Posterior cingulate gyrus (tissue), 11 donors: ENCODE measurements at regions of chr11 and their contacts with region 1.

Region 1: DNA sequence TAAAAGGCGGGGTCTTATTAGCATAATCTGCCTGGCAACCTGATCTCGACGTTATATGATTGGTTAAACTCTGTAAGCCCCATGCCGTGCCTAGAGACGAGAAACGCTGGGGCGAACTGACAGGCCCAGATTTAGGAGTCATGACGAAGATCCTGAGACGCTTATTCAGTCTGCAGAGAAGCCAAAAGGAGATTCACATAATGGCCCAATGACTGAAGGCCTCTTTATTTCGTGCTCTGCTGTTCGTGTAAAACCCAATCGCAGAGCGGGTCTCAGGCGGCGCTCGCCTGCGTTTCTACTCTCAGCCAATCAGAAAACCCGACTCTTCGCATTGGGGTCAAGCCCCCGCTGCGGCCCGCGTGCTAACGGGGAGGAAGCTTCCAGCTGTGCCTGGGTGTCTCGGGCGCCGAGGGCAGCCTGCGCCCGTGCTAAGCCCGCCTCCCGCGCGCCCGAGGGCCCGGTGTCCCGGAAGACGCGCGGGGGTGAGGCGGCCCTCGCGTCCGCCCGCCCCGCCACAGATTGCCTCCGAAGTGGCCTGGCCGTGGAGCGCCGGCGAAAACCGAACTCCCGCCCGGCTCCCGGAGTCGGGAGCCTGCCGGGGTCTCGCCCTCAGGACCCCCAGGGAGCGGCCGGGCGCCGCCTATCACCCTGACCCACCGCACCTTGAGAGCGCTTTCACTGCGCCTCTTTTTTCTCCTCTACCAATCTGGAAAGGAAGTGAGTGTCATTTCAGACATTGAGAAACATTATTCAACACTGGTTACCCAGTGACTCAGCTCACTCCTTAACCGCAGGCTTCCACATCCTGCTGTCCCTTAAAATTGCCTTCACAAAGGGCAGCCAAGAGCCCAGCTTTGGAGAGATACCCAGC is 446 bp upstream of the PRDM10 start:
- DNase-seq: peak; percentile 89 to 99 (median 93)

Region 2: GRCh38 chr11:129503636-129504035 is 499.4 kb before region 1 on chr11:
- intact Hi-C with region 1: no loop called
- DNase-seq: no peak

Region 3: DNA sequence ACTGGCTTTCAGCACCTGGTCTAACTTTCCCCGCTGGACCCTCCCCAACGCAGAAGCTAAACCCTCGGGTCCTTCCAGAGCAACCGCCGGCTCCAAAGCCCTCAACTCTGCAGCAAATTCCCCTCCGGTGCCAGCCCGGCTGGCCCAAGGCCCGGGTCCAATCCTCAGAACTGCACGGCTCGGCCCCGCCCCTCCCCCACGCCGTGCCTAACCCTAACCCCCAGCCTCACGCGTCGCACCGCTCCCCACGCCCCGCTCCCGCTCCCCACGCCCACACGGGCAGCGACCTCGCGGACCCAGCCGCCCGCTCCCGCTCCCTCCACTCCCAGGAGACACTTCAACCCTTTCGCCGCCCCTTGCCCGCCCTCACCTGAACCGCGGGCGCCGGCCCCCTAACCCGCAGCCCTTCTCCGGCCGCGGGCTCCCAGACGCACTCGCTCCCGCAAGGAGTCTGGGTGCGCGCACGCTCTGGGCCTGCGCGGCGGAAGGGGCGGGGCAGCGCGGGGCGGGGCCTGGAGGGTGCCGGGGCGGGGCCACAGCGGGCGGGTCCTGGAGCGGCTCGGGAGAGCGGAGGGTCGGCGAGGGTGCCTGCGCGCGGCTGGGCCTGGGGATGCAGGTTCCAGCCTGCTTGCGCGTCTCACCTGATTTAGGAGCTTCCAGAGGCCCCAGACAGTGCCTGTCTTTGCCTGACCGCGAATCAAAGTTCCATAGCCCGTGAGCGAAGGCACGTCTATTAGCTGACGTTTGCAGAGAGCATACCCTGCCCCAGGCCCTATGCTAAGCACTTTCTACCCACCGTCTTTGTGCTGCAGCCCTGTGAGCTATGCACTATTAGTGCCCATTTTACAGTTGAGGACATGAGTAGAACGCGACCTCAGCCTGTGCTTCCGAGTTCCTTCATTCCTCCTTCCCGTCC is 107.7 kb before region 1 on chr11 and contains the start of gene NFRKB:
- intact Hi-C with region 1: loop called (anchors 10 kb)
- DNase-seq: peak; percentile 71 to 98 (median 87)

Region 4: DNA sequence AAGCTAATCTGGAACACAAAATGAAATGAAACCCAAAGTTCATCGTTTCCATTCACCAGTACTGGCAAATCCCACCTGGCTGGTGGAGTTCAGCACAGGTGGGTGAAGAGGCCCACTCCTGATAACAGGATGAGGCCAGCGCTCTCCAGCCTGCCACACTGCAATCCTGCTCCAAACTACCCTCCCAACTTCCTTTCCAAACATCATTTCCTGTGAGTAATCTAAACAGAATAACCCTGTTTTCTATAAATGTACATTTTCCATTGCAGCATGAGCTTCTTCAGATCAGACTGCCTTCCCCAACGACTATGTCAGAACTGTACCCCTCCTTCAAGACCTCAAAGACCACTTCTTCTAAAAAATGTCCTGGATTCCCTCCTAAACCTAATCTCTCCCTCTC is 91.8 kb before region 1 on chr11:
- intact Hi-C with region 1: no loop called
- DNase-seq: no peak

Region 5: GRCh38 chr11:129930296-129930695 is 72.8 kb before region 1 on chr11:
- intact Hi-C with region 1: loop called (anchors 2 kb)
- DNase-seq: no peak

Region 6: GRCh38 chr11:130050257-130050656 is 47.2 kb after region 1 on chr11:
- intact Hi-C with region 1: no loop called
- DNase-seq: no peak

Region 7: DNA sequence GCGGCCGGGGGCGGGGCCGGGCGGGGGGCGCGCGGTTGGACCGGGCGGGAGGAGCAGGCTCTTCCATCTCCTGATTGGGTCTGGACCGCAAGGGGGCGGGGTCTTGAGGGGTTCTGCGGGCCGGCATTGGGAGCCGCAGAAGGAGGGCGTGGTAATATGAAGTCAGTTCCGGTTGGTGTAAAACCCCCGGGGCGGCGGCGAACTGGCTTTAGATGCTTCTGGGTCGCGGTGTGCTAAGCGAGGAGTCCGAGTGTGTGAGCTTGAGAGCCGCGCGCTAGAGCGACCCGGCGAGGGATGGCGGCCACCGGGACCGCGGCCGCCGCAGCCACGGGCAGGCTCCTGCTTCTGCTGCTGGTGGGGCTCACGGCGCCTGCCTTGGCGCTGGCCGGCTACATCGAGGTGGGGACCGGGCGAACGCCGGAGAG is 66.6 kb after region 1 on chr11 and contains the start of gene APLP2:
- intact Hi-C with region 1: loop called (anchors 1 kb)
- DNase-seq: peak; percentile 98 to 100 (median 99)

Region 8: DNA sequence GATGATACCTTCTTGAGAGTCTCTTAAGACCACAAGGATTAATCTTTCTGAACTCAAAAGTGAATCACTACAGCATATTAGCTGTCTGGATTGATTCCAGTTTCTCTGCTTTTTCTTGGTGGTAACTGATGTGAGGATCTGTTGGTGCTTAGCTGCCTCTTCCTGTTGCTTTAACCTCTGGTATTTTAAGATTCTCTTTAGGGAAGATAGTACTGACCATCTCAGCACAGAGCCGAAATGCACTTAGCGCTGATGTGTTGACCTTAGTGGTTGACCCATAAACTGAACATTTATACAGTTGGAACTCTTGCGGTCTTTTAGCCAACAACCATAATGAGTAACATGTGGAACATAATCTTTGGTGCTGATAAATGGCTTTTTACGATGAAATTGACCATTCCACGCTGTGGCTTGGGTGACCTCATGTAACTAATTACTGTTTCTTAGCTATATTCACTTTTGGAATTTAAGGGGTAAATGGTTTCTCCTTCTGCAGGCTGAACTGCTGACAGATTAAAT is 100.3 kb after region 1 on chr11:
- intact Hi-C with region 1: no loop called
- DNase-seq: no peak

Region 9: DNA sequence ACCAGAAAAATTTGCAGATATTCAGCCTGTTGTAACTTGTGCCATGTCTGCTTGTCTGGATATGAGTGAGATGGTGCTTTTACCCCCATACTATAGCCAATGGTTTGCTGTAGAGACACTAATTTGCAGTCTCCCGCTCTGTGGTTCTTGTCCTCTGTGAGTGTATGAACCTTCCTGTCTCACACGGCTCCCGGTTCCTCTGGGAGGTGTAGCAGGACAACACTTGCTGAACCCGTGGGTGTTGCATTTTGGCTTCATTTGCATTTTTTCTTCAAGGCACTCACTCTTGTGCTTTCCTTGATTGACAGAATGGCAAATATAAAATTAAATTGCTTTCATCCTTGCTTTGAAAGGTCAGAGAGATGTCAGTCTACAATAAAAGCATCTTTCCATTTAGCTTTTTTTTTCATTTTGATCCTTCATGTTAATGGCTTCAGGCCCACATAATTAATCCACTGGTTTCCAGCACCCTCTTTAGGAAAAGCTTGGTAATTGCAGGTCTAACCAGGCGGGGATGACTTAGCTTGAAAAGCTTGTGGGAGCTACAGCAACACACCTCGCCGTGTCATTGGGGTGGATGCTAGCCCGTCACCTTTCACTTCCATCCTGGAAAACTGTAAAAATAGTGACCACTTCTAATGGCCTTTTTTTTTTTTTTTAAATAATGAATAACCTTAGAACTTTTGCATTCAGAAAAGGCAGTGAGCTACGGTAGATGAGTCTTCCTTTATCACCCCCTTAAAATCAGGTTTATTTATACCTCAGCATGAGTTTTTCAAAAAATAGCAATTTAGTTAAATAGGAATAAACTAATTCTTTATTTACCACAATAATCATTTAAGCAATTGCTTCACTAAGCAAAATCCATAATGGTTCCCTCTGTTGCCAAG is 129.1 kb after region 1 on chr11:
- intact Hi-C with region 1: loop called (anchors 10 kb)
- DNase-seq: no peak

Region 10: GRCh38 chr11:130314750-130315285 is 311.7 kb after region 1 on chr11 and contains the start of gene ZBTB44:
- intact Hi-C with region 1: loop called (anchors 5 kb)
- DNase-seq: peak; percentile 89 to 99 (median 94)